Activated naive CD4-positive, alpha-beta T cell treated with anti-CD3 and anti-CD28 coated beads for 36 hours (primary cell): ENCODE measurements at regions of chr10 and their contacts with region 1.

Region 1: DNA sequence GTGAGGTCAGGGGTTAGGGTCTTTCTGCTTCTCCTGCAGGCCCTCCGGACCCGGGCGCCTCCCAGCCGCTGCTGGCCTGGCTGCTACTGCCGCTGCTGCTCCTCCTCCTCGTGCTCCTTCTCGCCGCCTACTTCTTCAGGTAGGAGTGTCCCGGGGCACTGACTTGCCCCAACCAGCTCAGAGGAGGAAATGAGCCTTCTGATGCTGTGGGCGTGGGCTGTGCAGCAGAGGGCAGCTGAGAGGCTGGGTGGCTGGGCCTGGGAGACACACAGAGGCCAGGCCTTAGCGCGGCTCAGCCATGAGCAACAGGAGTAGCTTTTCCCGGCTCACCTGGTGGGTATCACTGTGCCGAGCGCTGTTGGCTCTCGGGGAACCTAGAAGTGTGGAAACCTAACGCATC is 78.9 kb downstream of the MKI67 start:
- DNase-seq: peak; percentile 92
- H3K4me3 Mint-ChIP-seq: peak overlapping the region; percentile 84
- H3K27ac Mint-ChIP-seq: peak overlapping the region; percentile 95
- H3K4me1 Mint-ChIP-seq: peaks cover 44% of the 10 kb centered on the region
- H3K27me3 Mint-ChIP-seq: no peaks in the 10 kb centered on the region

Region 2: DNA sequence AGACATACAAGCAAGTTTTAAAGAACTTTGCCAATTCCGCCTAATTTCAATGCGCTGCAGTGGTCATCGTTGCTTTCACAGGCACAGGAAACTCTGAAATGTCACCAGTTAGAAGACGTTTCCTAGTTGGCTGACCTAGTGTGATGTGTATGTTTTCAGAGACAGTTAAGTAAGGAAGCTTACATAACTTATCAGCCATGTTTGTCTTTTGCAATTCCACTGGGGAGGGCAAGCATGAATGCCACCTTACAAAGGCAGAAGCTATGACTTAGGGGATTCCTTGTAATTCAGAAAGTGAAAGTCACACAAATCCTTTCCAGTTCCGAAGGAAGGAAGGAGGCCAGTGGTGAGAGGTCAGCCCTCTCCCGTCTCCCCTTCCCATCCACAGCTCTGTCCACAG is 513.3 kb before region 1 on chr10:
- CTCF ChIA-PET with region 1: no interaction called
- intact Hi-C with region 1: no loop called
- DNase-seq: no peak
- H3K4me3 Mint-ChIP-seq: no peak overlapping the region
- H3K27ac Mint-ChIP-seq: no peak overlapping the region
- H3K4me1 Mint-ChIP-seq: no peaks in the 10 kb centered on the region
- H3K27me3 Mint-ChIP-seq: peaks cover 7% of the 10 kb centered on the region

Region 3: DNA sequence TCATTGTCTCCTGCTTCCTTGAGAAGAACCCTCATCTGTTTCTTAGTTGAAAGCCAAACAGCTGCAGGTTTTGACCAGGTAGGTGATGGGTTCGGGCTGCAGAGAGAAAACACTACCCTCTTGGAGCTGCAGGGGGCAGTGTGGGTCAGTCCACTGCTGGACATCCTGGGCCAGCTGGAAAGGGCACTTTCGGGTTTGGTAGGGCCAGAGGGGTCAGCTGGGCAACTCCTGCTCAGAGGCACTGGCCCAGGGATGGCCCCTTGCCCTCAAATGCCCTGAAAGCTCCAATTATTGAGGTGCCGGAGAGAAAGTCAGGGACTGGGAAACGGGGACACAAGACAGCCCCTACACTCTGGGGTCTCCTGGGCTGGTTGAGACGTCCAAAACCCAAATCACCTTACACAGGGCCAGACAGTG is 11.8 kb before region 1 on chr10:
- CTCF ChIA-PET with region 1: interaction called, 48 read pairs
- intact Hi-C with region 1: loop called (anchors 1 kb)
- DNase-seq: peak; percentile 78
- H3K4me3 Mint-ChIP-seq: no peak overlapping the region
- H3K27ac Mint-ChIP-seq: no peak overlapping the region
- H3K4me1 Mint-ChIP-seq: peaks cover 3% of the 10 kb centered on the region
- H3K27me3 Mint-ChIP-seq: no peaks in the 10 kb centered on the region

Region 4: GRCh38 chr10:128064108-128064969 is 17.0 kb after region 1 on chr10:
- CTCF ChIA-PET with region 1: interaction called, 74 read pairs
- intact Hi-C with region 1: loop called (anchors 1 kb)
- DNase-seq: peak; percentile 89
- H3K4me3 Mint-ChIP-seq: peak overlapping the region; percentile 26
- H3K27ac Mint-ChIP-seq: peak overlapping the region; percentile 93
- H3K4me1 Mint-ChIP-seq: peaks cover 58% of the 10 kb centered on the region
- H3K27me3 Mint-ChIP-seq: no peaks in the 10 kb centered on the region